ENCODE measurements at regions of chr15 and their contacts with region 1.

Region 1: GRCh38 chr15:40470423-40471104 is at the start of gene CHST14:
- DNase-seq: peak; percentile 90
- H3K4me3 Mint-ChIP-seq: peak within 1 kb of the TSS; percentile 90
- H3K27ac Mint-ChIP-seq: peak within 1 kb of the TSS; percentile 83
- H3K4me1 Mint-ChIP-seq: peaks cover 26% of the 10 kb centered on the region
- H3K27me3 Mint-ChIP-seq: peaks cover 1% of the 10 kb centered on the region
- total RNA-seq, gene CHST14: 9.0 and 9.7 TPM in 2 replicates

Region 2: DNA sequence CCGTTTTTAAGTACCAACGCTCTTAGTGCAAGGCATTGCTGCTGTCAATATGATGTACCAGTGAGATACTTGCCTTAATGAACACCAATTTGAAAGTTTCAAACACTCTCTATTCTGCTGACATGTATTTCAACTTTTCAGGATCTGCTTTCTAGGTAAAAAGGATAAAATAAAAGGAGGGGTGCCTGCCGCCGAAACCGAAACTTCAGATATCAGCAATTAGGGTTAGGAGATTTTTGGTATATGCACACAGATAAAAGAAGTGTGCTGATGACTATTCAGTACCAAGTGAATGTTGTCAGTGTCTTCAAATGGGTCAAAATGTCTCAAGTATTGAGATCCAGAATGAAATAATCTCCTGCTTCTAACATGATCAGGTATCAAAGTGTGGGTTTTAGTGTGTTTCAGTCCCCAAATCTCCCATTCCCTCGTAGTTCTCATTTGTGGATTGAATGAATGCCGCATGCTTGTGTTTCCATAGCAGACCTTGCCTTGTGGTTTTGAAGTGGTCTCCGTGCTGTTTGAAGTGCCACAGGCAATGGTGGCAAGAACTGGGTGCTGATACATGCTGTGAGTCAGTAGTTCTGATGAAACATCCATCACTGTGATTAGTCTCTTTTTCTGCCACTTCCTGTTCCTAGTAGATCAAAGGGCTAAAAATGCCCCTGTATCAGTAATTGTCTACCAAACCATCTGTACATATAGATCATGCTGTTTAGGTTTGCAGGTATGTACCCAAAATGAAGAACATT is 22.7 kb after region 1 on chr15:
- intact Hi-C with region 1: loop called (anchors 2 kb)
- DNase-seq: peak; percentile 75
- H3K4me3 Mint-ChIP-seq: peak overlapping the region; percentile 32
- H3K27ac Mint-ChIP-seq: peak overlapping the region; percentile 36
- H3K4me1 Mint-ChIP-seq: peaks cover 22% of the 10 kb centered on the region
- H3K27me3 Mint-ChIP-seq: peaks cover 7% of the 10 kb centered on the region

Measured in activated CD4-positive, alpha-beta T cell treated with anti-CD3 and anti-CD28 coated beads, Interleukin-2, amount 10 ng/mL, durations not matched to agents 24 days and 14 days (primary cell).